ENCODE measurements at regions of chr17 and their contacts with region 1.

Region 1: DNA sequence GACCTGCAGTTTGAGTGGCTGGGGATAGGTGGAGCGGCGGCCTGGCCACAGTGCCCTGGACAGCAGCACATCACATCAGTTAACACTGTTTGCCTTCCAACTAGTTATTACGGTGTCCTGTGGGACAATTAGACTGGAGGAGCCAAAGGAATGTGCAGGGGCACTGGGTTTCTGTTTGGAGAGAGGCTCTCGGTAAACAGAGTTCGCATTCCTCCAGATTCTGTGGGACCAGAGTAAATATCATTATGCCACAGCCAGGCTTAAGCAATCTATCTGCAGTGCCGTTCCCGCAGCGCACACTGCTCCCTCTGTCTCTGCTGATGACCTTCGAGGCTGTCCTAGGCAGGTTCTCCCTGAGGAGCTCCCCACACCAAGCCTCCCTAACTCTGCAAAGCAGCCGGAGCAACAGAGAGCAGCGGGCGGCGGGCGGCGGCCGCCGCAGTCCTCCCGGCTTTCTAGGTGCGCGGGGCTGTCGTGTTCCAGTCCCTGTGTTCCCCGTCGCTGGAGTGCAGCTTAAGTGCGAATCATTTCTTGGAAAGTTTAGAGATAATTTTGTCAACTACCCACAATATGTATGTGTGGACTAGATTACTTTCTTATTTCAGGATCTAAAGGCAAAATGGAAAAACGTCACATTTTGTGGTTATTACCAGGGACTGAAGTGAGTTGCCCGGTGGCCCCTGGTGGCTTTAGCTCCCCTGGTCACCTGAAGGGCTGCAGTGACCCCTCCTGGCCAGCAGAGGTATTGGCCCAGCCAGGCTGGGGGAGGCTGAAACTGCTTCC is 43.2 kb downstream of the PGS1 start:
- H3K4me3 ChIP-seq: no peak overlapping the region
- H3K27ac ChIP-seq: no peak overlapping the region
- H3K4me1 ChIP-seq: no peaks in the 10 kb centered on the region
- CTCF ChIP-seq: peak; percentile 92

Region 2: GRCh38 chr17:77724876-77725615 is 696.6 kb before region 1 on chr17:
- CTCF ChIA-PET with region 1: no interaction called
- POLR2A ChIA-PET with region 1: no interaction called
- H3K4me3 ChIP-seq: no peak overlapping the region
- H3K27ac ChIP-seq: no peak overlapping the region
- H3K4me1 ChIP-seq: no peaks in the 10 kb centered on the region
- CTCF ChIP-seq: no peak

Region 3: GRCh38 chr17:78289802-78290363 is 131.8 kb before region 1 on chr17:
- CTCF ChIA-PET with region 1: interaction called, 47 read pairs
- POLR2A ChIA-PET with region 1: interaction called, 7 read pairs
- H3K4me3 ChIP-seq: no peak overlapping the region
- H3K27ac ChIP-seq: no peak overlapping the region
- H3K4me1 ChIP-seq: no peaks in the 10 kb centered on the region
- CTCF ChIP-seq: peak; percentile 98

Region 4: GRCh38 chr17:78360371-78361224 is 61.1 kb before region 1 on chr17:
- CTCF ChIA-PET with region 1: interaction called, 137 read pairs
- POLR2A ChIA-PET with region 1: interaction called, 5 read pairs
- H3K4me3 ChIP-seq: peak overlapping the region; percentile 76
- H3K27ac ChIP-seq: peak overlapping the region; percentile 67; the same call in 1 of the 2 replicates
- H3K4me1 ChIP-seq: peaks cover 7% of the 10 kb centered on the region
- CTCF ChIP-seq: peak; percentile 96

Region 5: GRCh38 chr17:78390241-78391050 is 31.2 kb before region 1 on chr17:
- CTCF ChIA-PET with region 1: interaction called, 28 read pairs
- POLR2A ChIA-PET with region 1: no interaction called
- H3K4me3 ChIP-seq: no peak overlapping the region
- H3K27ac ChIP-seq: no peak overlapping the region
- H3K4me1 ChIP-seq: peaks cover 3% of the 10 kb centered on the region
- CTCF ChIP-seq: no peak

Region 6: DNA sequence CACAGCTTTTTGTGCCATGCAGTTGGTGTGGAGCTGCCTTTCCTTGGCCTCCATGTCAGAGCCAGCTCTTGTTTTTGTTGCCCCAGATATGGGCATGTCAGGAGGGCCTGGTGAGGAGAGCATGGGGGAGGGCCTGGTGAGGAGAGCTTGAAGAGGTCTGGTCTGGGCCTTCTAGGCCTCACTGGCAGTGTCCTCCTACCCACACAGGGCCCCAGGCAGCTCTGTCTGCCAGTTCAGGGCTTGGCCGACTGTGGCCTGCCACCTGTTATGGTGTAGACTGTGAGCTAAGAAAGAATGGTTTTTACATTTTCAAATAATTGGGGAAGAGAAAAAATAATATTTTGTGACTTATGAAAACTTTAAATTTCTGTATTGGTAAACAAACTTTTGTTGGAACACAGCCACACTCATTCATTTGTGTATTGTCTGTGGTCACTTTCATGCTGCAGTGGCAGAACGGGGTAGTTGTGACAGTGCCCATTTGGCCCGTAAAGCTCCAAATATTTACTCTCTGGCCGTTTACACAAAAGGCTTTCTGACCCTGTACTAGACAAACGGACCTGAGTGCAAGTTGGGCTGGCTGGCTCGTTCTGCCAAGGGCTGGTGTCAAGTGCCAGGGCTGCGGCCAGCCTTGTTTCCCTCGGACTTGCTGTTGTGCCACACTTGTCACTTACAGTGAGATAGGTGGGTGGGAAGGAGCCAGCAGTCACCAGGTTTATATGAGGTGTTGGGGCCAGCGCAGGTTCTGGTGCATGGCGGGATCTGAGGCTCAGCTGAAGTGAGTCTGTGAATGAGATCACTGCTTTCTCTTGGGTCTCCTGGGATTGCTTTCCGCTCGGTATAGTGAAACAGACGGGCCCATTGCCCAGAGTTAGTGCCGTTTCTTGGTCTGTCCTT is 25.0 kb before region 1 on chr17:
- CTCF ChIA-PET with region 1: interaction called, 28 read pairs
- POLR2A ChIA-PET with region 1: no interaction called
- H3K4me3 ChIP-seq: no peak overlapping the region
- H3K27ac ChIP-seq: no peak overlapping the region
- H3K4me1 ChIP-seq: no peaks in the 10 kb centered on the region
- CTCF ChIP-seq: no peak

Region 7: GRCh38 chr17:78432226-78433012 is 10.7 kb after region 1 on chr17:
- CTCF ChIA-PET with region 1: interaction called, 17 read pairs
- POLR2A ChIA-PET with region 1: interaction called, 4 read pairs
- H3K4me3 ChIP-seq: no peak overlapping the region
- H3K27ac ChIP-seq: no peak overlapping the region
- H3K4me1 ChIP-seq: no peaks in the 10 kb centered on the region
- CTCF ChIP-seq: no peak

Region 8: GRCh38 chr17:78442648-78443128 is 21.0 kb after region 1 on chr17:
- CTCF ChIA-PET with region 1: interaction called, 10 read pairs
- POLR2A ChIA-PET with region 1: no interaction called
- H3K4me3 ChIP-seq: no peak overlapping the region
- H3K27ac ChIP-seq: no peak overlapping the region
- H3K4me1 ChIP-seq: no peaks in the 10 kb centered on the region
- CTCF ChIP-seq: no peak